Breast epithelium (tissue), 4 donors: ENCODE measurements at regions of chr5 and their contacts with region 1.

Region 1: GRCh38 chr5:115124741-115125140 is 45.0 kb downstream of the TRIM36 start:
- DNase-seq: no peak
- H3K4me3 ChIP-seq: no peak overlapping the region
- H3K27ac ChIP-seq: no peak overlapping the region
- H3K4me1 ChIP-seq: no peaks in the 10 kb centered on the region
- H3K27me3 ChIP-seq: no peaks in the 10 kb centered on the region
- CTCF ChIP-seq: no peak
- POLR2A ChIP-seq: no peak

Region 2: GRCh38 chr5:115847290-115847689 is 722.5 kb after region 1 on chr5:
- intact Hi-C with region 1: loop called (anchors 5 kb)
- DNase-seq: no peak
- H3K4me3 ChIP-seq: no peak overlapping the region
- H3K27ac ChIP-seq: no peak overlapping the region
- H3K4me1 ChIP-seq: peaks cover 0 to 3% of the 10 kb centered on the region in 2 donors
- H3K27me3 ChIP-seq: no peaks in the 10 kb centered on the region
- CTCF ChIP-seq: no peak
- POLR2A ChIP-seq: no peak